ENCODE measurements at regions of chr6 and their contacts with region 1.

Region 1: GRCh38 chr6:10759312-10759839 is 11.8 kb downstream of the TMEM14B start:
- H3K4me3 ChIP-seq: no peak overlapping the region
- H3K27ac ChIP-seq: no peak overlapping the region
- H3K4me1 ChIP-seq: no peaks in the 10 kb centered on the region
- CTCF ChIP-seq: no peak

Region 2: DNA sequence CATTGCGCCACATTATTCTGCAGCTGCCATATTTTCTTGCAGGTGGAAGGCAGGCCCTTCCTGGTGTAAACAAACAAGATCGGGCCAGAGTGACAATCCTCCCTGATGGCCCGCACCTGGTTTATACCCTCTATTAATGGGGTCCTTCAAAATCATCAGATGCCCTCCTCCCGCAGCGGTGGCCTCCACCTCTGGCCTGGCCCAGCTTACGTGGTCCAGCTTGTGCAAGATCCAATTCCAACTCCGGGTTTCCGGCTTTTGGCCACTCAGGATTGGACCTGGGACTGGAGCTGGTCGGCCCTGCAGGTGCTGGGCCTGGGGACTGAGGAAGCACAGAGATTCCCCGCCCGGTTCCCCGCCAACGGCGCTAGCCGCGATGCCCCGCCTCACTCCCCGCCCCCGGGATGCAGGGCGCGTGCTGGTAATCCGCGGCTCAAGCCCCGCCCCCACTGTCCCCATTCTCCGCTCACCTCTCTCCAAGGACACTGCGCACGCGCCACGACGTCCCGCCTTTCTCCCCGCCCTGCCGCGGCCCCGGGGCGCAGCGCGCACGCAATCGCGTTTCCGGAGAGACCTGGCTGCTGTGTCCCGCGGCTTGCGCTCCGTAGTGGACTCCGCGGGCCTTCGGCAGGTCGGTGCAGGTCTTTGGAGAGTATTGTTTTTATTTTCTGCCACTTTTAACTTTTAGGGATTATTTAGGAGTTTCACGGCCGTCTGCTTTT is 12.0 kb before region 1 on chr6 and contains the start of gene TMEM14B:
- CTCF ChIA-PET with region 1: interaction called, 22 read pairs
- POLR2A ChIA-PET with region 1: interaction called, 4 read pairs
- H3K4me3 ChIP-seq: peak within 1 kb of the TSS; percentile 83
- H3K27ac ChIP-seq: peak within 1 kb of the TSS; percentile 67
- H3K4me1 ChIP-seq: peaks cover 7% of the 10 kb centered on the region; the same call in 1 of the 2 replicates
- CTCF ChIP-seq: no peak